ENCODE measurements at regions of chr4 and their contacts with region 1.

Region 1: DNA sequence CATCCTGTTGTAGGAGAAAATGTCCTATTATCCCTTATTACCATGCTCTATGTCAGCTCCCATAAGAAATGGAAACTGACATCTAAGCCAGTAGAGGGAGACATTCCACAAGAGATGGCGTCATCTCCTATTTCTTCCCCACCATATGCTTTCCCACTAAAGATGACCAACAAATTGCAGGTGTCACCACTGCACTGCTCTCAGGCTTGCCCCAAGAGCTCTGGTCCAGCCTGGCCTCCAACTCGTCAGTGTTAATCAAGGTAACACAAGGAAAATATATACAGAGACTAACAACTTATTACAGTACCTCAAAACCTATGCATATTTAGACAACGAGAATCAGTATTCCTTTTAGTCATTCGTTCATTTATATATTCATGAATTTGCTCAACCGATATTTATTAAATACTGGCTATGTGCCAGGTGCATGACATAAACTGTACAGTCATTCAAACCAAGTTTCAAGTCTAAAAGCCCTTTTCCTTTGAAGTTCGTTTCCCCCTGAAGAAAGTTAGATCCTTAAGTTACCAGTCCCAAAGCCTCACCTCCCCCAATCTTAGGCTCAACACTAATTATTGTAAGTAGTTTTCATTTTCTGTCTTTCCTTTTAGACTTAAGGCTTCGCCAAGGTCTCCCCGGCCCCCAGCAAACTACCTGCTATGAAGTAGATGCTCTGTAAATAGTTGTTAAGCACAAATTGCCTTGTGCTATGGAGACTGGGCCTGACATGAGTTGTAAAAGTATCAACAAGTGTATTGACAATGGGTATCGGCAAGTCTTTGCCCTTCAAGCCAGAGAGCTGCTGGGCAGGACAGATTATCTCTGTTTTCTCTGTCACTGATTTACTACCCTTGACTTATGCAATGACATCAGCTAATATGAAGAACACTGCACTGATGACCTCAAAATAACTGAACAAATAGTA is 3.1 kb upstream of the FGB start:
- DNase-seq: peak; percentile 39

Region 2: GRCh38 chr4:154618708-154619315 is 59.1 kb after region 1 on chr4:
- CTCF ChIA-PET with region 1: interaction called, 33 read pairs
- POLR2A ChIA-PET with region 1: no interaction called
- DNase-seq: peak; percentile 61

Region 3: GRCh38 chr4:154626793-154627484 is 67.2 kb after region 1 on chr4:
- CTCF ChIA-PET with region 1: interaction called, 10 read pairs
- POLR2A ChIA-PET with region 1: interaction called, 3 read pairs
- DNase-seq: peak; percentile 32